Activated CD8-positive, alpha-beta T cell treated with anti-CD3 and anti-CD28 coated beads for 36 hours (primary cell): ENCODE measurements at regions of chr9 and their contacts with region 1.

Region 1: GRCh38 chr9:129932303-129933151 is 97.3 kb downstream of the USP20 start:
- DNase-seq: no peak
- ATAC-seq: peak; percentile 31
- H3K4me3 Mint-ChIP-seq: peak overlapping the region; percentile 55
- H3K27ac Mint-ChIP-seq: peak overlapping the region; percentile 87
- H3K4me1 Mint-ChIP-seq: peaks cover 64% of the 10 kb centered on the region
- H3K27me3 Mint-ChIP-seq: no peaks in the 10 kb centered on the region
- CTCF ChIP-seq: no peak

Region 2: DNA sequence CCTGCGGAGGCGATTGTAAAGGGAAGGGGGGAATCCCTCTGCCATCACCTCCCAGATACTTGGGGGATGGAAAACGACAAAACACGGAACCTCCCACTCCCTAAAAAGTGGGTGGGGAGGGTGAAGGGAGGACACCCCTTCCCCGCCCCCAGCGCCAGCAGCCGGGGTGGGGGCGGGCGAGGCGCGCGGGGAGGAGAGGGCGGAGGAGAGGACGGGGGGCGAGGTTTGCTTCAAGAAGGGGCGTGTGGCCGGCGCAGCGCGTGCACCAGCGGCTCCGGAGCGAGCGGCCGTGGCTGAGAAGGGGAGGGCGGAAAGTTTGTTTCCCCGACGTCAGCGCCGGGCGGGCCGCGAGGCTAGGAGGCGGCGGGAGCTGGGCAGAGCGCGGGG is 267.1 kb before region 1 on chr9 and contains the start of gene PRRX2:
- CTCF ChIA-PET with region 1: no interaction called
- POLR2A ChIA-PET with region 1: no interaction called
- intact Hi-C with region 1: no loop called
- DNase-seq: peak; percentile 64
- ATAC-seq: peak; percentile 73
- H3K4me3 Mint-ChIP-seq: peak within 1 kb of the TSS; percentile 44
- H3K27ac Mint-ChIP-seq: no peak within 1 kb of the TSS
- H3K4me1 Mint-ChIP-seq: peaks cover 7% of the 10 kb centered on the region
- H3K27me3 Mint-ChIP-seq: peaks cover 13% of the 10 kb centered on the region
- CTCF ChIP-seq: no peak
- total RNA-seq, gene PRRX2: 0.85 to 1.2 TPM

Region 3: DNA sequence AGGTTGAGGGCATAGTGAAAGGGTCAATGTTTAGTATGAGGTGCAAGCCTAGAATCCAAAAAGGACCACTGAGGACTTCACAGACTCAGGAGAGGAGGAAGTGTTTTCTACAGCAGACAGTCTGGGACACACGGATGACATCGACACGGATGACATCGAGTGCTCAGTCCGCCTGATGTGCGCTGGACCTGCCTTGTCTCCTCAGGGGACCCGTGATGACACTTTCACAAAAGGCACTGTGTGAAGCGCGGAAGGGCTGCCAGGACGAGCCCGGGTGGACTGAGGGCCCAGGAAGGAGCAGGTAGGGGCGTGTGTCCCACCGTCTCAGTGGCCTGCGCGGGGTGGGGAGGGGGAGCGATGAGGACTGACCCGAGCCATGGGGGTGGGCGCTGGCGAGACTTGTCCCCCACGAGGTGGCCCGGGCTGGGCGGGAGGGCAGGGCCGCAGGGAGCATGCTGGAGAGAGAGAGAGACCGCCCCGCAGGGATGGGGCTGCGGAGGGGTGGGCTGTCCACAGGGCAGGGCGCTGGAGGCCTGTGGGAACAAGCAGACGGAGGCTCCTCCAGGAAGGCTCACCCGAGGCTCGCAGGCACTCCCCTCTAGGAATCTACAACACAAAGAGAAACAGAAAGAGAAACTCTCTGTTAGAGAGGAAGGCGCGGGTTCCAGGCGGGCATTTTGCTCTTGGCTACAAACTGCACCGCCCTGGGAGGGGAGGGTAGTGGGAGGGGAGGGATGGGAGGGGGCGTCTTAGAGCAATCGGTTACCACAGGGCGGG is 42.4 kb before region 1 on chr9:
- CTCF ChIA-PET with region 1: interaction called, 12 read pairs
- POLR2A ChIA-PET with region 1: interaction called, 19 read pairs
- intact Hi-C with region 1: loop called (anchors 2 kb)
- DNase-seq: peak; percentile 92
- ATAC-seq: peak; percentile 6
- H3K4me3 Mint-ChIP-seq: peak overlapping the region; percentile 92
- H3K27ac Mint-ChIP-seq: peak overlapping the region; percentile 99
- H3K4me1 Mint-ChIP-seq: peaks cover 66% of the 10 kb centered on the region
- H3K27me3 Mint-ChIP-seq: no peaks in the 10 kb centered on the region
- CTCF ChIP-seq: no peak

Region 4: DNA sequence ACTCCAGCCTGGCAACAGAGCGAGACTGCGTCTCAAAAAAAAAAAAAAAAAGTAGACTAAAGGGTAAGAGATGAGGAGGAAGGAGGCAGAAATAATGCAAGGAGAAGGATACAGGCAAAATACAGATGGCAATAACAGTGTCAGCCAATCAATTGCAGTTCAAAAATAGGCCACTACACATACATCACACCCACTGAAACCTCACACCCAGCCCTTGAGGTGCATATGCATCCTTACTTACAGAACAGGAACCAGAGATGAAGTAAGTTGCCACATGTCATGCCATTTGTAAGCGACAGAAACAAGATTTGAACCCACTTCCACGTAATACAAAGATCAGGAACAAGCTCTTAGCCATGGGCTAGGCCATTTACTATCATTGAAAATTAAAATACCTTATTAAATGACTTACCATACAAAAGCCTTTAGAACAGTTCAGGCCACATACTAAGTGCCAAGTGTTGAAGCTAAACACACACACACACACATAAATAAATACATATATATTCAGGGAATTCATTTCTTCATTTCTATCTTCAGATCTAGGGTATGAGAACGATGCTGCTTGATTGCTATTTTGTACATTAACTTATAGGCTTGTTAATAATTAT is 12.1 kb after region 1 on chr9:
- CTCF ChIA-PET with region 1: interaction called, 6 read pairs
- POLR2A ChIA-PET with region 1: interaction called, 18 read pairs
- intact Hi-C with region 1: no loop called
- DNase-seq: peak; percentile 81
- ATAC-seq: peak; percentile 88
- H3K4me3 Mint-ChIP-seq: peak overlapping the region; percentile 19
- H3K27ac Mint-ChIP-seq: peak overlapping the region; percentile 81
- H3K4me1 Mint-ChIP-seq: peaks cover 53% of the 10 kb centered on the region
- H3K27me3 Mint-ChIP-seq: no peaks in the 10 kb centered on the region
- CTCF ChIP-seq: peak; percentile 28

Region 5: GRCh38 chr9:129954868-129955550 is 22.5 kb after region 1 on chr9:
- CTCF ChIA-PET with region 1: interaction called, 10 read pairs
- POLR2A ChIA-PET with region 1: interaction called, 23 read pairs
- intact Hi-C with region 1: no loop called
- DNase-seq: no peak
- ATAC-seq: no peak
- H3K4me3 Mint-ChIP-seq: no peak overlapping the region
- H3K27ac Mint-ChIP-seq: peak overlapping the region; percentile 70
- H3K4me1 Mint-ChIP-seq: peaks cover 52% of the 10 kb centered on the region
- H3K27me3 Mint-ChIP-seq: no peaks in the 10 kb centered on the region
- CTCF ChIP-seq: no peak